Activated CD8-positive, alpha-beta T cell treated with anti-CD3 and anti-CD28 coated beads for 36 hours (primary cell): ENCODE measurements at regions of chr5 and their contacts with region 1.

Region 1: DNA sequence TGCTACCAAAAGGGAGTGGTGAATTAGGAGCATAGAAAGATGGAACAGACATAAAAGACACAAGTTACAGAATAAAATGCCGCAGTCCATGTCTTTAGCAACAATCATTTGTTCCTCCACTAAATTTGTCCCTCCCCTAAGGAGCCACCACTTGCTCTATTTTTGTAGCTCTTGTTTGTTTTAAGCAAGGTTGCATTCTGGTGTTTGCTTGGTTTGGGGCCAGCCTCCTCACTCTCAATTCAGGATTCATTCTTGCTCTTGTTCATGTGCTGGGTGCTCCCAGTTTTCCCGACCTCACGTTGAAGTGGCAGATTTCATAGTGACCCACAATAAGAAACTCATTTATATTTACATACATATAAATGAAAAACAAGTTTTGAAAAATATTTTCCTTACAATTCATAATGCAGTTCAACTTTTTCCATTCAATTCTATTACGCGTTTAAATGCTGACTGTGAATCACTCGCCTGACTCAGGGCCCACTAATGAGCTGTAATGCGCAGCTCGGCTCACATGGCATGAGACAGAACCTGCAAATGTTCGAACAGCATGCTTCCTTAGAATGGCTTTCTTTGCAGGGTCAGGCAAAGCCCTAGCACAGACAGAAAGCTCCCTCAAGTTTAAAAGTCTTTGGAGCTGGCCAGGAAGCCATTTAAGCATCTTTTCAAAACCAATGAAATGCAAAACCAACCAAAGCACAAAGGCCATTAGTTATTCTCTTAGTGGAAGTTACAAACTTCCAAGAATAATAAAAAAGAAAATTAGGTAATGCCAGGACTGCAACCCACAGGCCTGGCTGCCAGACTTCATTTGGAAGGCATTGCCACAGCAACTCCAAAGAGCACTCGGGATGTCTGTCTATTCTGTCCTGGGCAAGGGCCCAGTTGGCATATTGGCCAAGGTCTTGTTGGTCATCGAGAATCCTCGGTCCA is 41.7 kb downstream of the RETREG1 start:
- DNase-seq: no peak
- ATAC-seq: no peak
- H3K4me3 Mint-ChIP-seq: no peak overlapping the region
- H3K27ac Mint-ChIP-seq: peak overlapping the region; percentile 24
- H3K4me1 Mint-ChIP-seq: peaks cover 28% of the 10 kb centered on the region
- H3K27me3 Mint-ChIP-seq: no peaks in the 10 kb centered on the region
- CTCF ChIP-seq: no peak

Region 2: GRCh38 chr5:16229357-16229940 is 345.6 kb before region 1 on chr5:
- CTCF ChIA-PET with region 1: no interaction called
- POLR2A ChIA-PET with region 1: no interaction called
- intact Hi-C with region 1: no loop called
- DNase-seq: no peak
- ATAC-seq: no peak
- H3K4me3 Mint-ChIP-seq: no peak overlapping the region
- H3K27ac Mint-ChIP-seq: no peak overlapping the region
- H3K4me1 Mint-ChIP-seq: no peaks in the 10 kb centered on the region
- H3K27me3 Mint-ChIP-seq: no peaks in the 10 kb centered on the region
- CTCF ChIP-seq: no peak

Region 3: DNA sequence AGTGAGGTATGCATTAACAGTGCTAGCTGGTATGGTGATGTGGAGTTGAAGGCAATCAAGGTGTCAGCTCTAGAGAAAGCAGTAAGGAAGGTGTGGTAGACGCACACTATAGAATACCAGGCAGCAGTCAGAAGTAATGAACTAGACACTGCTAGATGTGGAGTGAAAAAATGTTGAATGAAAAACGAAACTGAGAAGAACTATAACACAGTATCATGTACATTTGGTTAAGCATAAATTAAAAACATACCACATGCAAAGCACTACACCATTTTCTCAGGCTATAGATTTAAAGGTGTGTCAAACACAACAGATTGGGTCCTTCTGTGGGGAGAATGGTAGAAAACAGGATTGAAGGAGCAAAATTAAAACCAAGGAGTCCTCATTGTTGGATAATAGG is 124.9 kb before region 1 on chr5:
- CTCF ChIA-PET with region 1: no interaction called
- POLR2A ChIA-PET with region 1: no interaction called
- intact Hi-C with region 1: no loop called
- DNase-seq: no peak
- ATAC-seq: no peak
- H3K4me3 Mint-ChIP-seq: no peak overlapping the region
- H3K27ac Mint-ChIP-seq: no peak overlapping the region
- H3K4me1 Mint-ChIP-seq: peaks cover 10% of the 10 kb centered on the region
- H3K27me3 Mint-ChIP-seq: no peaks in the 10 kb centered on the region
- CTCF ChIP-seq: no peak

Region 4: DNA sequence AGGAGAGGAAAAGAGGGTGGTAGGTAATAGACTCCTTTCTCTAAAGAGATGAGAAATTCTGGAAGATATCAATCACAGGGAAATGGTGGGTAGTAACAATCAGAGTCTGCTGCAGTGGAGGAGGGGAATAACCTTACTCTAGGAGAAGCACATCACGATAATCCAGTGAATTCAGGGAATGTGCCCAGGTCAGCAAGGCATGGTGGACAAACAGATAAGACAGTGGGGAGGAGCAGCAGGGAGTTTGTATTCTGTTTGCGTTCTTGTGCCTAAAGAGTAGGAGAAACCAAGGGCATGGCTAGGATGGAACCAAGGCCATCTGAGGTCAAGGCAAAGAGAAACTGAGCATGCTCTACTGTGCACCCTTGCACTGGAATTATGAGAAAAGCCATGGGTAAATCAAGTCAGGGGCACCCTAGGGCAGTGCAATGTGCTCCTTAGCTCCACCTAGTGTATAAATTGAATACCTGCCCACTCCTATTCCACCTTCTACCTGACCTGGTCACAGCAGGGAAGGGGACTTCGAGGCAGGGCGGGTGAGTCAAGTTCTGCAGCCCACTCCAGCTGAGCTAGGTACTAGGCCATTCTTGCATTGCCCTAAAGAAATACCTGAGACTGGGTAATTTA is 10.1 kb after region 1 on chr5:
- CTCF ChIA-PET with region 1: interaction called, 16 read pairs
- POLR2A ChIA-PET with region 1: no interaction called
- intact Hi-C with region 1: no loop called
- DNase-seq: no peak
- ATAC-seq: peak; percentile 79
- H3K4me3 Mint-ChIP-seq: no peak overlapping the region
- H3K27ac Mint-ChIP-seq: no peak overlapping the region
- H3K4me1 Mint-ChIP-seq: peaks cover 29% of the 10 kb centered on the region
- H3K27me3 Mint-ChIP-seq: no peaks in the 10 kb centered on the region
- CTCF ChIP-seq: peak; percentile 53